ENCODE measurements at regions of chr5 and their contacts with region 1.

Region 1: DNA sequence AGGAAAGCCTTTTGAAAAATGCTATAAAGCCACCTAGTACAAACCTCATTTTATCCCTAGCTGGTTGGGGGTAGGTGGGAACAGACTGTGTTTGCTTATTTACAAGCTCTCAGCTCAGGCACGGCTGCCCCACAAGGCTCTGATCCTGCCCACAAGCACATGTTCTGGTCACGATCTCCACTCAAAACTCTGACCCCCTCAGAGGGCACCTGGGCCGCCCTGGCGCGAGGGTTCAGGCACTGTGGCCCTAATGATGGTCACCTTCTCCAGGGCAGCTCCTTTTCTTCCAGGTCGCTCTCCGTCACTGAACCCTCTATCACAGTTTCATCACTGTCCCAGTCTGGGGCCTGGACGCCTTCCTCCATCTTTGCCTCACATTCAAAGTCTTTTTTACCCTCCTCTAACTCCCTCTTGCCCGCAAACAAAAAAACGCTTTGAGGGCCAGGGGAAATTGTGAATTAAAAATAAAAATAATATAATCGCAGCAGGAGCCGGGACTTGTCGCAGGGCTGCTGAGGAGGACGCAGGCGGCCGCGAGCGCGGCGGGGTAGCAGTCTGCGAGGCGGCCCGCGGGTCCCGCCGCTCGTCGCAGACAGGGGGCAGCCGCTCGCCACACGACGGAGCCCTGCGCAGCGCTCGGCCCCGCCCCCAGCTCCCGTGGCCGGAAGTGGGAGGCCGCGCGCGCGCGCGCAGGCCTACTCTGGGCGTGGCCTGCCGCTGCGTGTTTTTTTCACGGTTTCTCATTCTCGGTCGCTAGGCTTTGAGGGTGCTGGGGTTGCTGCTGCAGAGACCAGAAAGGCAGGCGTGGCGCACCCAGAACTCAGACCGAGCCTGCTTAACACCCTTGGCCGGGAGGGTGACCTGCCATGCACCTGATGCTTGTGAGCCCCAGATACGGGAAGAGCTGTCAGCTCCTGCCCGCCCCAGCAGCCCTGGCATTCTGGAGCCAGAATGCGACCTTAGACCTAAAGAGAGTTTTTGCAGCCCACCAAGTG is at the start of gene ANKRD31:
- DNase-seq: peak; percentile 85 to 92 (median 91)
- H3K4me3 ChIP-seq: peak within 1 kb of the TSS; percentile 63 to 84
- H3K4me3 Mint-ChIP-seq: peak within 1 kb of the TSS; percentile 91 to 95 (median 94)
- H3K27ac ChIP-seq: peak within 1 kb of the TSS; percentile 69
- H3K27ac Mint-ChIP-seq: peak within 1 kb of the TSS; percentile 87 to 98 (median 98)
- H3K4me1 ChIP-seq: peaks cover 14% of the 10 kb centered on the region
- H3K4me1 Mint-ChIP-seq: peaks cover 8 to 16% (median 11%) of the 10 kb centered on the region in 4 donors
- H3K27me3 ChIP-seq: no peaks in the 10 kb centered on the region
- H3K27me3 Mint-ChIP-seq: no peaks in the 10 kb centered on the region
- total RNA-seq, gene ANKRD31: 0.73 to 0.86 TPM

Region 2: DNA sequence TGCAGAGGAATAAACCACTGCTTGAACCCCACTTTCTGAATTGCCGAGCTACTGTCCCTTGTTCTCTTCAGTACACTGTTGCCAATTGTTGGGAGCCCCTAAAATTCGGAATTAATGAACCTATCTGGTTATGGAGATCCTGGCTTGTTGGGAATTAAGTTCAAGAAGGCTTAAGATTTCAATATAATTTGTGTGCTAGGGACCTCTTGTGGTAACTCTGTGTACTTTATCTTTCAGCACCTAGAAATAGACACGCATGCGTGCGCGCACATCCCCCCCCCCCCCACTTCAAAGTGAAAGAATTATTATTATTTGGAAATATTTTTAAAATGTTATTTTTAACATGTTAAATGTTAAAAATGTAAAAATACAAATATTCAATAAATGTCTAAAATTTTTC is 317.1 kb before region 1 on chr5:
- CTCF ChIA-PET with region 1: interaction called, 14 read pairs
- POLR2A ChIA-PET with region 1: no interaction called
- intact Hi-C with region 1: no loop called
- DNase-seq: peak in 4 of 5 donors; percentile 19 to 48 (median 23)
- H3K4me3 ChIP-seq: no peak overlapping the region
- H3K4me3 Mint-ChIP-seq: peak overlapping the region in 1 of 8 donors; percentile 15
- H3K27ac ChIP-seq: no peak overlapping the region
- H3K27ac Mint-ChIP-seq: no peak overlapping the region
- H3K4me1 ChIP-seq: no peaks in the 10 kb centered on the region
- H3K4me1 Mint-ChIP-seq: no peaks in the 10 kb centered on the region
- H3K27me3 ChIP-seq: no peaks in the 10 kb centered on the region
- H3K27me3 Mint-ChIP-seq: peaks cover 0 to 5% of the 10 kb centered on the region in 2 donors

Region 3: GRCh38 chr5:75023368-75024159 is 213.1 kb before region 1 on chr5:
- CTCF ChIA-PET with region 1: no interaction called
- POLR2A ChIA-PET with region 1: no interaction called
- intact Hi-C with region 1: no loop called
- DNase-seq: peak in 4 of 5 donors; percentile 27 to 43 (median 38)
- H3K4me3 ChIP-seq: no peak overlapping the region
- H3K4me3 Mint-ChIP-seq: peak overlapping the region; percentile 0 to 79 (median 48)
- H3K27ac ChIP-seq: no peak overlapping the region
- H3K27ac Mint-ChIP-seq: peak overlapping the region in 6 of 7 donors; percentile 49 to 85 (median 72)
- H3K4me1 ChIP-seq: peaks cover 28% of the 10 kb centered on the region
- H3K4me1 Mint-ChIP-seq: peaks cover 19 to 31% (median 29%) of the 10 kb centered on the region in 4 donors
- H3K27me3 ChIP-seq: no peaks in the 10 kb centered on the region
- H3K27me3 Mint-ChIP-seq: peaks cover 0 to 2% of the 10 kb centered on the region in 2 donors

Region 4: GRCh38 chr5:75059912-75060545 is 176.6 kb before region 1 on chr5:
- CTCF ChIA-PET with region 1: interaction called, 11 read pairs
- POLR2A ChIA-PET with region 1: interaction called, 46 read pairs
- intact Hi-C with region 1: no loop called
- DNase-seq: peak; percentile 68 to 85 (median 81)
- H3K4me3 ChIP-seq: no peak overlapping the region
- H3K4me3 Mint-ChIP-seq: peak overlapping the region in 7 of 8 donors; percentile 29 to 75 (median 70)
- H3K27ac ChIP-seq: peak overlapping the region; percentile 37
- H3K27ac Mint-ChIP-seq: peak overlapping the region; percentile 91 to 99 (median 96)
- H3K4me1 ChIP-seq: peaks cover 82% of the 10 kb centered on the region
- H3K4me1 Mint-ChIP-seq: peaks cover 38 to 76% (median 60%) of the 10 kb centered on the region in 4 donors
- H3K27me3 ChIP-seq: no peaks in the 10 kb centered on the region
- H3K27me3 Mint-ChIP-seq: no peaks in the 10 kb centered on the region

Region 5: GRCh38 chr5:75265731-75266130 is 29.1 kb after region 1 on chr5:
- CTCF ChIA-PET with region 1: interaction called, 23 read pairs
- POLR2A ChIA-PET with region 1: no interaction called
- intact Hi-C with region 1: loop called (anchors 1 kb)
- DNase-seq: peak in 4 of 5 donors; percentile 36 to 52 (median 38)
- H3K4me3 ChIP-seq: no peak overlapping the region
- H3K4me3 Mint-ChIP-seq: no peak overlapping the region
- H3K27ac ChIP-seq: no peak overlapping the region
- H3K27ac Mint-ChIP-seq: no peak overlapping the region
- H3K4me1 ChIP-seq: no peaks in the 10 kb centered on the region
- H3K4me1 Mint-ChIP-seq: peaks cover 0 to 2% (median under 1%) of the 10 kb centered on the region in 4 donors
- H3K27me3 ChIP-seq: no peaks in the 10 kb centered on the region
- H3K27me3 Mint-ChIP-seq: peaks cover 1 to 7% of the 10 kb centered on the region in 2 donors

Region 6: DNA sequence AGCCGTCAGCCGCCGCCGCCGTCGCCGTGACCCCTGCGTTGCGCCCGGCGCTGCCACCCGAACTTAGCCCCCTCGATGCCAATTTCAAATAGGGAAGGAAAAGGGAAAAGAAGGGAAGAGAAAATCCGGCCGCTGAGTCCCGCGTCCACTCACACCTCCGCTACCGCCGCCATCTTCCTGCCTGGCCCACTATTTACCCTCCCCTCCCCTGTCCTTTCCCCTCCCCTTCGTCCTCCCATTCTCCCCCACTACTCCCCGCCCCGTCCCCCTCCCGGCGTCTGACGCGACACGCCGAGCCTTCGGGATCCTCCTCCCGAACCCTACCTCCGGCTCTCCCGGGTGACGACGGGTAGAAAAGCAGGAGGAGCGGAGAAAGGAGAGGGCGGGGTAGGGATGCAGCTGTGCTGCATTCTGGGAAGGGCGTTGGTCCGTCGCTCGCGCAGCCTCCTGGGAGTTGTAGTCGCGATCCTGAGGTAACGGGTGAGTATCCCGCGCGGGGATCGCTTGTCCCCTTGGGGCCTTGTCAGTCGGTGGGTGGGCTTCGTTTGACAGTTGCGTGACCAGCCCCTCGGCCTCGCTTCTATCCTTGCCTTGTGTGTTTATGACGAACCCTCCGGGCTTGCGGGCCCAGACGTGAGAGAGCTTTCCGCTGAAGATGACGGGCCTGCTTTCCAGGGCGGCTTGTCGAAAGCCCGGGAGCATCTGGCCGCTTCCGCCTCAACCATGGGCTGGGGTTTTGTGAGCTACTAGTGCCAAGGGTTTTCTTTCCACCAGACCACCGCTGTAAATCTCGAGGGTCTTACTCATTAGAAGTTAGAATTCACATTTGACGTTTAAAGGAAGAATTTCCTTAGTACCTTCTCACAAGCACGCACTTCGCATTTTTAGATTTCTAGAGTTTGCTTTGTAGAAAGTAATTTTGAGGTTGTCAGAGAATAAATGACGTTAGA is 275.1 kb after region 1 on chr5 and contains the starts of genes CERT1 and POLK:
- CTCF ChIA-PET with region 1: interaction called, 4 read pairs
- POLR2A ChIA-PET with region 1: interaction called, 5 read pairs
- intact Hi-C with region 1: loop called (anchors 1 kb)
- DNase-seq: peak; percentile 92 to 97 (median 94)
- H3K4me3 ChIP-seq: peak within 1 kb of the TSS; percentile 54 to 81
- H3K4me3 Mint-ChIP-seq: peak within 1 kb of the TSS; percentile 90 to 97 (median 96)
- H3K27ac ChIP-seq: peak within 1 kb of the TSS; percentile 76
- H3K27ac Mint-ChIP-seq: peak within 1 kb of the TSS; percentile 94 to 98 (median 96)
- H3K4me1 ChIP-seq: peaks cover 44% of the 10 kb centered on the region
- H3K4me1 Mint-ChIP-seq: peaks cover 39 to 65% (median 49%) of the 10 kb centered on the region in 4 donors
- H3K27me3 ChIP-seq: no peaks in the 10 kb centered on the region
- H3K27me3 Mint-ChIP-seq: no peaks in the 10 kb centered on the region
- total RNA-seq, gene CERT1: 43.8 to 49.7 TPM
- total RNA-seq, gene POLK: 30.0 to 30.4 TPM

Region 7: GRCh38 chr5:75701856-75702255 is 465.2 kb after region 1 on chr5:
- CTCF ChIA-PET with region 1: no interaction called
- POLR2A ChIA-PET with region 1: no interaction called
- intact Hi-C with region 1: no loop called
- DNase-seq: no peak
- H3K4me3 ChIP-seq: no peak overlapping the region
- H3K4me3 Mint-ChIP-seq: no peak overlapping the region
- H3K27ac ChIP-seq: no peak overlapping the region
- H3K27ac Mint-ChIP-seq: peak overlapping the region in 1 of 7 donors; percentile 36
- H3K4me1 ChIP-seq: no peaks in the 10 kb centered on the region
- H3K4me1 Mint-ChIP-seq: peaks cover 4 to 14% (median 11%) of the 10 kb centered on the region in 4 donors
- H3K27me3 ChIP-seq: no peaks in the 10 kb centered on the region
- H3K27me3 Mint-ChIP-seq: no peaks in the 10 kb centered on the region

Region 8: GRCh38 chr5:75717082-75717922 is 480.7 kb after region 1 on chr5 and contains the start of gene POC5:
- CTCF ChIA-PET with region 1: no interaction called
- POLR2A ChIA-PET with region 1: interaction called, 14 read pairs
- intact Hi-C with region 1: loop called (anchors 1 kb)
- DNase-seq: peak; percentile 98 to 99 (median 98)
- H3K4me3 ChIP-seq: peak within 1 kb of the TSS; percentile 74 to 95
- H3K4me3 Mint-ChIP-seq: peak within 1 kb of the TSS; percentile 99 to 100 (median 100)
- H3K27ac ChIP-seq: peak within 1 kb of the TSS; percentile 74
- H3K27ac Mint-ChIP-seq: peak within 1 kb of the TSS; percentile 98 to 100 (median 99)
- H3K4me1 ChIP-seq: peaks cover 18% of the 10 kb centered on the region
- H3K4me1 Mint-ChIP-seq: peaks cover 29 to 43% (median 36%) of the 10 kb centered on the region in 4 donors
- H3K27me3 ChIP-seq: no peaks in the 10 kb centered on the region
- H3K27me3 Mint-ChIP-seq: no peaks in the 10 kb centered on the region
- total RNA-seq, gene POC5: 15.1 to 20.0 TPM